Left lung (tissue), 14 donors: ENCODE measurements at regions of chr2 and their contacts with region 1.

Region 1: GRCh38 chr2:57759822-57760300 is 286.7 kb upstream of the VRK2 start:
- DNase-seq: peak; percentile 78 to 94 (median 82)
- ATAC-seq: peak; percentile 100
- H3K4me3 ChIP-seq: no peak overlapping the region
- H3K27ac ChIP-seq: no peak overlapping the region
- H3K4me1 ChIP-seq: peaks cover 9 to 10% of the 10 kb centered on the region in 2 donors
- H3K27me3 ChIP-seq: no peaks in the 10 kb centered on the region
- CTCF ChIP-seq: peak; percentile 87 to 93

Region 2: DNA sequence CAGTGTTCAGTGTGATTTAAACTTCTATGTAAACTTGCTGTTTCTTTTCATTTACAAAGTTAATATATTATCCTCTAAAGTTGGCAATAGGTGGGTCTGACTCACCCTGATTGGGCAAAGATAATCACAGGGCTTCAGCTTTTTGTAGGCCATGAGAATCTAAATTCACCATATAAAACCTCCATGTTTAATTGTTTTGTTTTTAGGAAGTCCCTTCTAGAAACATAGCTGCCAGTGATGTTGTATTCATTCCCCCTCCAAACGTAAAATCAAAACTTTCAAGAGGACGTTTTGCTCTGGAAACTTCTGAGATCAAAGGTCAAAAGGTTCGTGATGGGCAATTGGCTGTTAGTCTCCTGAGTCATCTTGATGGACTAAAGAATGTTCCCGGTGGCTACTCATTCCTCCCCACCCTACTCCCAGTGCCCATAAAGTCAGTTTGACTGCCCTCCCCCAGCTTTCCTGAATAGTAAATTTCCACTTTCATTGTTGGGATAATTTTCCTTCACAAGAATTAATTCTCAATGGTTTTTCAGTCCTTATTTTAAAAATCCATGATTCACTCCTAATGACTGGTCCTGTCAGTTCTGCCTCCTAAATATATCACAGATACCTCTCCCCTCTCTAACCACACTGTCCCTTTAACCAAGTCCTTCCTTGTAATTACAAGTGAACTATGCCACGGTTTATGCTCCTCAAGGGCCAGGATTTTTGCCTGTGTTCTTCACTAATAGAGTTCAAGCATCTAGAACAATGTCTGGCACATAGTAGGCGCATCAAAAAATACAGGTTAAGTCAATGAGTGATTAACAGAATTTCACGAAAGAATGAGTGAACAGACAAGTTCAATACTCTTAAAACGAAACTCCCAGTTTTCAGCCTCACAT is 122.4 kb after region 1 on chr2:
- intact Hi-C with region 1: no loop called
- DNase-seq: no peak
- ATAC-seq: no peak
- H3K4me3 ChIP-seq: no peak overlapping the region
- H3K27ac ChIP-seq: no peak overlapping the region
- H3K4me1 ChIP-seq: no peaks in the 10 kb centered on the region
- H3K27me3 ChIP-seq: no peaks in the 10 kb centered on the region
- CTCF ChIP-seq: no peak

Region 3: GRCh38 chr2:58448065-58448507 is 688.2 kb after region 1 on chr2:
- intact Hi-C with region 1: loop called in 1 of 2 experiments (anchors 10 kb)
- DNase-seq: peak in 3 of 4 donors; percentile 17 to 51 (median 45)
- ATAC-seq: peak; percentile 87
- H3K4me3 ChIP-seq: no peak overlapping the region
- H3K27ac ChIP-seq: no peak overlapping the region
- H3K4me1 ChIP-seq: no peaks in the 10 kb centered on the region
- H3K27me3 ChIP-seq: no peaks in the 10 kb centered on the region
- CTCF ChIP-seq: peak in 1 of 2 donors; percentile 35